Common myeloid progenitor, CD34-positive (primary cell): ENCODE measurements at regions of chr13 and their contacts with region 1.

Region 1: GRCh38 chr13:52128714-52129700 is at the start of gene NEK5:
- DNase-seq: peak; percentile 41 to 67 (median 59)
- H3K4me3 ChIP-seq: peak within 1 kb of the TSS; percentile 66 to 94 (median 76)
- H3K27ac ChIP-seq: no peak within 1 kb of the TSS
- H3K4me1 ChIP-seq: peaks cover 2 to 18% (median 13%) of the 10 kb centered on the region in 4 experiments
- H3K27me3 ChIP-seq: no peaks in the 10 kb centered on the region

Region 2: DNA sequence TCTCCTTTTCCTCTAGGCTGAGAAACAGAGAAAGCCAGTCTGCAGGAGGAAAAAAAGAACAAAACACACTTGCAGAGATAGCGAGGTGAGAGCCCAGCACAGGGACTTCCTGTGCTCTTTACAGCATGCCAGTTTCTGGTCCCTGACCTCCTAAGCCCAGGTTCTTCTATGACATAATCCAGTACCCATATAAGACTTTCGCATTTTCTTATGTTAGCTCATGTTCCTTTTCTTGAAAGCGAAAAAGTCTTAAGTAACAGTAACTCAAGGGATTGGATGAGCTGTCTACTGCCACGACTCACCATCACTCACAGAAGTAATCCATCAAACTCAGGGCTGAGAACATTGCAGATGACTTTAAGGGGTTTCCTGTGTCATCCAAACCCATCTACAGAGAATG is 249.9 kb before region 1 on chr13:
- CTCF ChIA-PET with region 1: no interaction called
- POLR2A ChIA-PET with region 1: no interaction called
- DNase-seq: no peak
- H3K4me3 ChIP-seq: no peak overlapping the region
- H3K27ac ChIP-seq: no peak overlapping the region
- H3K4me1 ChIP-seq: no peaks in the 10 kb centered on the region
- H3K27me3 ChIP-seq: no peaks in the 10 kb centered on the region

Region 3: DNA sequence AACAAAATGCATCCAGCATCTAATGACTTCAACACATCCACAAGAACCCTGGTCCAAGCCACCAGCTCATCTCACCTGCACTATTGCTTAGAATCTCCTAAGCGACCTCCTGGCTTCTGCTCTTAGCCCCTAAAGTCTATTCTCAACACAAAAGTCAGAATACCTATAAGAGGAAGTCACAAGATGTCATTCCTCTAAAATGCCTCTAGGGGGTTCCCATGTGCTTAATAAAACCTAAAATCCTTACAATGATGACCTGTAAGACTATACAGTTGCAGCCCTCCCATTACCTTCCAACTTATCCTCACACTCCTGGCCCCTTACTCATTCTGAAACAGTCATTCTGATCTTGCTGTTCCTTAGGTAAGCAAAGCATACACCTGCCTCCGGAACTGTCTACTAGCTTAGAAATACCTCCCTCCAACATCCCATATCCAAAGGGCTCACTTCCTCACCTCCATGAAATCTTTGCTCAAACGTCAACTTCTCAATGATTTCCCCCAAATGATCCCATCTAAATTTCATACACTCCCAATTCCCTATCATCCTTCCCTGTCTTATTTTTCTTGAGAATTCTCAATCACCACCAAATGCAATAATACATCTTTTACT is 127.8 kb before region 1 on chr13:
- CTCF ChIA-PET with region 1: interaction called, 27 read pairs
- POLR2A ChIA-PET with region 1: no interaction called
- DNase-seq: peak; percentile 59 to 74 (median 68)
- H3K4me3 ChIP-seq: no peak overlapping the region
- H3K27ac ChIP-seq: no peak overlapping the region
- H3K4me1 ChIP-seq: peaks cover 0 to 5% (median 3%) of the 10 kb centered on the region in 4 experiments
- H3K27me3 ChIP-seq: no peaks in the 10 kb centered on the region

Region 4: DNA sequence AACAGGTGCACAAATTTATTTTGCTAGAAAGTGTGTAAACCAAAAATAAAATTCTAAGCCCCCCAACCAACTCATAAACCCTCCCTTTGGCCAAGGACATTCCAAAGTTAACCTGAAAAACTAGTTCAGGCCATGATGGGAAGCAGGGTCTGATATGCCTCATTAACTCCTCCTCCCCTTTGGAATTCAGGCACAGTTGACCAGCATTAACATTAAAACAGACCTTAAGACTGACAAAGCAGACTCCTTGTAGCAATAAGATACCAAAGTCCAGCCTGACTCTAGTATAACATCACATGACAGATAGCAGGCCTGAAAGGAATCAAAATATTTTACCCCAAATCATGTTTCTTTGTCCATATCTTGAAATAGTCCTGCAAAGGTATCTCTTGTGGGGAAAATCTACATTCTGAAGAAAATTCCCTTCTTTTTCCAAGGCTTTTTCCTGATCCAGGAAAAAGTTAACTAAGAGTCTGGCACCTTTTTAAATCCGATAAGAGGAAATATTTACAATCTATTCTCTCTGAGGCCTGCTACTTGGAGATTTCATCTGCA is 19.8 kb before region 1 on chr13:
- CTCF ChIA-PET with region 1: no interaction called
- POLR2A ChIA-PET with region 1: no interaction called
- DNase-seq: no peak
- H3K4me3 ChIP-seq: no peak overlapping the region
- H3K27ac ChIP-seq: no peak overlapping the region
- H3K4me1 ChIP-seq: no peaks in the 10 kb centered on the region
- H3K27me3 ChIP-seq: no peaks in the 10 kb centered on the region

Region 5: GRCh38 chr13:52459668-52460067 is 330.7 kb after region 1 on chr13:
- CTCF ChIA-PET with region 1: no interaction called
- POLR2A ChIA-PET with region 1: no interaction called
- DNase-seq: peak in 1 of 3 donors; percentile 4
- H3K4me3 ChIP-seq: no peak overlapping the region
- H3K27ac ChIP-seq: peak overlapping the region in 1 of 2 experiments; percentile 14
- H3K4me1 ChIP-seq: peaks cover 8 to 26% (median 15%) of the 10 kb centered on the region in 4 experiments
- H3K27me3 ChIP-seq: no peaks in the 10 kb centered on the region